MCF 10A (cell line): ENCODE measurements at regions of chr19 and their contacts with region 1.

Region 1: DNA sequence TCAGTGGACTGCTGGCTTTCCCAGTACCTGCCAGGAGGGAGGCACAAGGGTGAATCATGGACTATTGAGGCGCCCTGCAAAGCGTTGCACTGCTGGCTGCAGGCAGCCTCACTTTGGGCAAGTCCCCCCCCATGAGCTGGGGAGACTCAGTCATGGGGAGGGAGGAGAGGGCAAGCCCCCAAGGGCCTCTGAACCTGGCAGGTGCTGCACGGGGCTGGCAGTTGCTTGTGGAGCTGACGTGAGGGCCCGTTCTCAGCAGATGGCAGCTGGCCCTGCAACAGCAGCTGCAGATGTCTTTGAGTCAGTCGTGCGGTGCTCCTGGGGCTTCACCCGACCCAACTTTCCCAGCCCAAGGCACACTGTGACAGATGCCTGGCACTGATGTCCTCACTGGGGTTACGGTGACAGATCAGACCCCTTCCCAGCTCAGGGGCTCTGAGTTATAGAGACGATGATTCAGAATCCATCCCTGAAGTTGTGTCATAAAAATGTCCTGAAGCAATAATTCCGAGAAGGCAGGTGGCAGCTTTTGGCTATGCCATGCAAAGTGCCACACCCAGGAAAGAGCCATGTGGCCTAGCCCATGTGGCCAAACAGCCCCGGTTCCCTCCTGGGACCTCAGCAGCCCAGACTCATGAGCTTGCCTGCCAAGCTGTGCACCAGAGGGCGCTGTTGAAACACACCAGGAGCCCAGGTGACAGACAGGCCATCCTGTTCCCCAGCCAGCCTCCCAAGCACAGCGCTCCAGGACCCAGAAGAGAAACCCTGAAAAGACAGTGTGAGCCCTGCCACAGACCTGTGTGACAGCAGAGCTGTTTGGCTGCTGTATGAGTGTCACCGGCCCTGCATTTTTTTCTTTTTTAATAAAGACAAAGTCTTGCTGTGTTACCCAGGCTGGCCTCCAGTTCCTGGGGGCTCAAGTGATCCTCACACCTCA is 53.6 kb upstream of the LDLR start:
- DNase-seq: peak; percentile 99
- H3K4me3 Mint-ChIP-seq: no peak overlapping the region
- H3K27ac Mint-ChIP-seq: peak overlapping the region; percentile 67
- H3K4me1 Mint-ChIP-seq: peaks cover 22% of the 10 kb centered on the region
- H3K27me3 Mint-ChIP-seq: no peaks in the 10 kb centered on the region
- CTCF ChIP-seq: peak; percentile 95

Region 2: DNA sequence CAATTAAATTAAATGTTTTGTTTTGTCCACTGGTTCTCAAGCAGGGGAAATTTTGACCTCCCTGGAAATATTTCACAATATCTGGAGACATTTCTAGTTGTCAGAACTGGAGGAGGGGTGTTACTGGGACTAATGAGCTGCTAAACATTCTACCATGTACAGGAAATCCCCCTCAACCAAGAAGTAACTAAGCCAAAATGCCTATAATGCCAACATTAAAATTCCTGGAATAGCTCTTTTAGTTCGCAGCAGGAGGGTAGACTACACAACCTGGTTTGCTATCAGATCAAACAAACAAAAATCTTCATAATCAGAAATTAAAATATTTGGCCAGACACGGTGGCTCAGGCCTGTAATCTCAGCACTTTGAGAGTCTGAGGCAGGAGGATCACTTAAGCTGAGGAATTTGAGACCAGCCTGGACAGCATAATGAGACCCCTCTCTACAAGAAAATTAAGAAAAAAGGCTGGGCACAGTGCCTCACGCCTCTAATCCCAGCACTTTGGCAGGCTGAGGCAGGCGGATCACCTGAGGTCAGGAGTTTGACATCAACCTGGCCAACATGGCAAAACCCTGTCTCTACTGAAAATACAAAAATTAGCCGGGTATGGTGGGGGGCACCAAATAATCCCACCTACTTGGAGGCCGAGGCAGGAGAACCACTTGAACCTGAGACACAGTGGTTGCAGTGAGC is 88.6 kb before region 1 on chr19:
- CTCF ChIA-PET with region 1: interaction called, 4 read pairs
- POLR2A ChIA-PET with region 1: interaction called, 3 read pairs
- intact Hi-C with region 1: loop called (anchors 1 kb)
- DNase-seq: peak; percentile 47
- H3K4me3 Mint-ChIP-seq: no peak overlapping the region
- H3K27ac Mint-ChIP-seq: peak overlapping the region; percentile 61
- H3K4me1 Mint-ChIP-seq: no peaks in the 10 kb centered on the region
- H3K27me3 Mint-ChIP-seq: no peaks in the 10 kb centered on the region
- CTCF ChIP-seq: no peak

Region 3: GRCh38 chr19:11046605-11047354 is 11.1 kb after region 1 on chr19:
- CTCF ChIA-PET with region 1: interaction called, 18 read pairs
- POLR2A ChIA-PET with region 1: no interaction called
- intact Hi-C with region 1: no loop called
- DNase-seq: no peak
- H3K4me3 Mint-ChIP-seq: no peak overlapping the region
- H3K27ac Mint-ChIP-seq: no peak overlapping the region
- H3K4me1 Mint-ChIP-seq: peaks cover 8% of the 10 kb centered on the region
- H3K27me3 Mint-ChIP-seq: no peaks in the 10 kb centered on the region
- CTCF ChIP-seq: no peak

Region 4: DNA sequence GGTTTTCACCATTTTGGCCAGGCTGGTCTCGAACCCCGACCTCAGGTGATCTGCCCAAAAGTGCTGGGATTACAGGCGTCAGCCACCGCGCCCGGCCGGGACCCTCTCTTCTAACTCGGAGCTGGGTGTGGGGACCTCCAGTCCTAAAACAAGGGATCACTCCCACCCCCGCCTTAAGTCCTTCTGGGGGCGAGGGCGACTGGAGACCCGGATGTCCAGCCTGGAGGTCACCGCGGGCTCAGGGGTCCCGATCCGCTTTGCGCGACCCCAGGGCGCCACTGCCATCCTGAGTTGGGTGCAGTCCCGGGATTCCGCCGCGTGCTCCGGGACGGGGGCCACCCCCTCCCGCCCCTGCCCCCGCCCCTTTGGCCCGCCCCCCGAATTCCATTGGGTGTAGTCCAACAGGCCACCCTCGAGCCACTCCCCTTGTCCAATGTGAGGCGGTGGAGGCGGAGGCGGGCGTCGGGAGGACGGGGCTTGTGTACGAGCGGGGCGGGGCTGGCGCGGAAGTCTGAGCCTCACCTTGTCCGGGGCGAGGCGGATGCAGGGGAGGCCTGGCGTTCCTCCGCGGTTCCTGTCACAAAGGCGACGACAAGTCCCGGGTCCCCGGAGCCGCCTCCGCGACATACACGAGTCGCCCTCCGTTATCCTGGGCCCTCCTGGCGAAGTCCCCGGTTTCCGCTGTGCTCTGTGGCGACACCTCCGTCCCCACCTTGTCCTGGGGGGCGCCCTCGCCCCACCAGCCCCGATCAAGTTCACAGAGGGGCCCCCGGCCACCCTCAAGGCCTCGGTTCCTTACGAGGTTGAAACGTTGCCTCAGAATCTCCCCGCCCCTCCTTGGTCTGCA is 54.6 kb after region 1 on chr19:
- CTCF ChIA-PET with region 1: interaction called, 31 read pairs
- POLR2A ChIA-PET with region 1: interaction called, 59 read pairs
- intact Hi-C with region 1: loop called (anchors 1 kb)
- DNase-seq: peak; percentile 98
- H3K4me3 Mint-ChIP-seq: peak overlapping the region; percentile 92
- H3K27ac Mint-ChIP-seq: peak overlapping the region; percentile 99
- H3K4me1 Mint-ChIP-seq: peaks cover 9% of the 10 kb centered on the region
- H3K27me3 Mint-ChIP-seq: no peaks in the 10 kb centered on the region
- CTCF ChIP-seq: no peak

Region 5: DNA sequence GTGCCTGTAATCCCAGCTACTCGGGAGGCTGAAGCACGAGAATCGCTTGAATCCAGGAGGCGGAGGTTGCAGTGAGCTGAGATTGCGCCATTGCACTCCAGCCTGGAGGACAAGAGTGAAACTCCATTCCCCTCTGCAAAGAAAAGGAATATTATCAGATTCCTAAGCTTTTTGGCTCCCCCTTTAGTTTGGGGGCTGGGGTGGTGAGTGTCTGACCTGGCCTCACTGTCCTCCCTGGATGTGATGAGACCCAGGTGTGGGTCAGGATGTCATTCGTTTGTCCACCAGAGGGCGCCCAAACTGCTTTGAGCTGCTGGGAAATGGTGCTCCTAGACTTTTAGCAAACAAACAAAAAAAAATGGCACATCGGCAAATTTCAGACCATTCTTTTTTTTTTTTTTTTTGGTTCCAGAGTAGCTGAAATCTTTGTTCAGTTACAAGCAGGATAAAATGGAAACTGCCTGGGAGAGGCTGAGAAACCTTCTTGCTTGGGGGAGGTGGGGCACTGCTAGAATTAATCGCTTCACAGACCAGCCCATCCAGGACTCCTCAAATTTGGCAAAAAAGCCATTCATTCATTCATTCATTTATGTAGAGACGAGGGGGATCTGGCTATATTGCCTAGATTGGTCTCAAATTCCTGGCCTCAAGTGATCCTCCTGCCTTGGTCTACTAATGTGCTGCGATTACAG is 90.4 kb after region 1 on chr19:
- CTCF ChIA-PET with region 1: interaction called, 63 read pairs
- POLR2A ChIA-PET with region 1: interaction called, 4 read pairs
- intact Hi-C with region 1: loop called (anchors 1 kb)
- DNase-seq: peak; percentile 88
- H3K4me3 Mint-ChIP-seq: no peak overlapping the region
- H3K27ac Mint-ChIP-seq: no peak overlapping the region
- H3K4me1 Mint-ChIP-seq: no peaks in the 10 kb centered on the region
- H3K27me3 Mint-ChIP-seq: no peaks in the 10 kb centered on the region
- CTCF ChIP-seq: peak; percentile 71

Region 6: GRCh38 chr19:11155373-11156120 is 119.8 kb after region 1 on chr19 and contains the start of gene SPC24:
- CTCF ChIA-PET with region 1: no interaction called
- POLR2A ChIA-PET with region 1: no interaction called
- intact Hi-C with region 1: no loop called
- DNase-seq: peak; percentile 99
- H3K4me3 Mint-ChIP-seq: peak within 1 kb of the TSS; percentile 77
- H3K27ac Mint-ChIP-seq: peak within 1 kb of the TSS; percentile 44
- H3K4me1 Mint-ChIP-seq: peaks cover 22% of the 10 kb centered on the region
- H3K27me3 Mint-ChIP-seq: no peaks in the 10 kb centered on the region
- CTCF ChIP-seq: no peak
- total RNA-seq, gene SPC24: 8.6 and 16.4 TPM in 2 replicates